Psoas muscle (tissue), 8 donors: ENCODE measurements at regions of chr1 and their contacts with region 1.

Region 1: GRCh38 chr1:56831871-56832693 is 12.9 kb upstream of the FYB2 start:
- DNase-seq: peak; percentile 56 to 74
- ATAC-seq: peak; percentile 77 to 95 (median 86)
- H3K4me3 ChIP-seq: no peak overlapping the region
- H3K27ac ChIP-seq: no peak overlapping the region
- H3K4me1 ChIP-seq: no peaks in the 10 kb centered on the region
- H3K27me3 ChIP-seq: peaks cover 0 to 4% (median 3%) of the 10 kb centered on the region in 3 donors
- CTCF ChIP-seq: peak; percentile 99

Region 2: DNA sequence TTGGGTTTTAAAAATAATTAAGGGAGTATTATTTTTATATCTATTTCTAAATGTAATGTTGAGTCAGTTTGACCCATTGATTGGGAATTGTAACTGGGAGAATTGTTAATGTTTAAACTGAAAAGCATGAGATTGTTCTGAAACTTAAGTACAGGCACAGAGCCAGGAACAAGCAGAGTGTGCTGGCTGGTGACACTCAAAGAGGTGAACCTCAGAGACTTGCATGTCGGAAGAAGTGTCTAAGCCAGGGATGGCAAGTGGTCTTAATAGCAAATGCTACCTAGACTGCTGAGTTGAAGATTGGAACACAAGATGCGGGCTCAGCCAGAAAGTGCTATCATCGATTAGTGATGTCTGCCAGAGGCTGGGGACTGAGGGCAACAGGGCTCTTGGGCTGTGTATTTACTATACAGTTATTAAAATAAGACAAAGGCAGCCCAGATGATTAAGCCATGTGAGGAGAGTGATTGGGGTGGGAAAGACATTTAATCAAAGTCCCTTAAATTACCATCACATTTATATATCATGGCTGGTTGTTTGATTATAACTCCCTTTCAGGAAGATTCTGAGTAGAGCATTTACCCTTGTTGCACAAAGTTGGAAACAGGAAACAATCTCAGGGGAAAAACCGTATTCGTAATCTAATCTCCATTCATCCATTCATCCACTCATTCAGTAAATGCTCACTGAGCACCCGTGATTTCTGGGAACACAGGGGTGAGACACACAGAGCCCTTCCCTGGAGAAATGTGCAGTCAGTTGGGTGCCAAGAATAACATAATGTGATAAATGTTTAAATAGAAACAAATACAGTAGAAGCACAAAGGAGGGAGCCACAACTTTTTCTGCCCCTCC is 65.3 kb after region 1 on chr1:
- intact Hi-C with region 1: no loop called
- DNase-seq: no peak
- ATAC-seq: no peak
- H3K4me3 ChIP-seq: no peak overlapping the region
- H3K27ac ChIP-seq: no peak overlapping the region
- H3K4me1 ChIP-seq: no peaks in the 10 kb centered on the region
- H3K27me3 ChIP-seq: no peaks in the 10 kb centered on the region
- CTCF ChIP-seq: no peak

Region 3: GRCh38 chr1:57061369-57061768 is 229.3 kb after region 1 on chr1:
- intact Hi-C with region 1: loop called (anchors 1 to 5 kb)
- DNase-seq: no peak
- ATAC-seq: peak; percentile 58 to 72 (median 67)
- H3K4me3 ChIP-seq: no peak overlapping the region
- H3K27ac ChIP-seq: no peak overlapping the region
- H3K4me1 ChIP-seq: peaks cover 16% of the 10 kb centered on the region
- H3K27me3 ChIP-seq: no peaks in the 10 kb centered on the region
- CTCF ChIP-seq: no peak

Region 4: GRCh38 chr1:58047265-58047858 is 1215.3 kb after region 1 on chr1:
- intact Hi-C with region 1: loop called (anchors 5 to 10 kb)
- DNase-seq: no peak
- ATAC-seq: peak in 2 of 4 donors; percentile 62 to 67
- H3K4me3 ChIP-seq: no peak overlapping the region
- H3K27ac ChIP-seq: no peak overlapping the region
- H3K4me1 ChIP-seq: no peaks in the 10 kb centered on the region
- H3K27me3 ChIP-seq: no peaks in the 10 kb centered on the region
- CTCF ChIP-seq: peak; percentile 69

Region 5: GRCh38 chr1:58162952-58163550 is 1331.0 kb after region 1 on chr1:
- intact Hi-C with region 1: loop called (anchors 5 kb)
- DNase-seq: peak; percentile 21 to 58
- ATAC-seq: peak; percentile 79 to 97 (median 90)
- H3K4me3 ChIP-seq: no peak overlapping the region
- H3K27ac ChIP-seq: no peak overlapping the region
- H3K4me1 ChIP-seq: peaks cover 5% of the 10 kb centered on the region
- H3K27me3 ChIP-seq: no peaks in the 10 kb centered on the region
- CTCF ChIP-seq: peak; percentile 80